H1 (cell line): ENCODE measurements at regions of chr4 and their contacts with region 1.

Region 1: GRCh38 chr4:158845311-158846041 is 76.7 kb downstream of the FNIP2 start:
- DNase-seq: peak in 1 of 2 experiments; percentile 33
- H3K4me3 ChIP-seq: peak overlapping the region in 2 of 4 experiments; percentile 14 to 34; a peak in 3 of 8 replicates
- H3K27ac ChIP-seq: peak overlapping the region; percentile 80; the same call in 1 of the 2 replicates
- H3K4me1 ChIP-seq: peaks cover 5 to 17% (median 9%) of the 10 kb centered on the region in 4 experiments
- H3K27me3 ChIP-seq: no peaks in the 10 kb centered on the region
- CTCF ChIP-seq: no peak
- EP300 ChIP-seq: no peak
- POLR2A ChIP-seq: peak in 1 of 2 experiments; percentile 41; a peak in 1 of 3 replicates
- RAD21 ChIP-seq: no peak

Region 2: DNA sequence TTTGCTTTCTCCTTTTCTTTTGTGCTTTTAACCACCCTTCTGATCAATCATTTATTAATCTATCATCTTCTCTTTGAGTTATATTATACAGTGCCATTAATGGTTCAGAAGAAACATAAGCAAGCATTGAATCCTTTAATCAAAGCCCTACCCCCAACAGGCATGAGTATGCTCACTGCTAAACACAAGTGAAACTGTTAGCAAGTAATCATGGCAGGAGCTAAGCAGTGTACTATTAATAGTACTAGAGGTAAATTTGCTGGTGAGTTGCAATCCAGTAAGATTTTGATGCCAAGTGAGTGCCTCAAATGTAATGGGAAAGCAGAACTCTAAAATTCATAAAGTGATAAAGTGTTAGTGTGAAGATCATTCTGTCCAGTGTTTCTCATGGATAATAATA is 19.4 kb before region 1 on chr4:
- CTCF ChIA-PET with region 1: interaction called, 11 read pairs
- POLR2A ChIA-PET with region 1: interaction called, 4 read pairs
- DNase-seq: no peak
- H3K4me3 ChIP-seq: no peak overlapping the region
- H3K27ac ChIP-seq: no peak overlapping the region
- H3K4me1 ChIP-seq: no peaks in the 10 kb centered on the region
- H3K27me3 ChIP-seq: no peaks in the 10 kb centered on the region
- CTCF ChIP-seq: no peak
- EP300 ChIP-seq: no peak
- POLR2A ChIP-seq: no peak
- RAD21 ChIP-seq: no peak

Region 3: DNA sequence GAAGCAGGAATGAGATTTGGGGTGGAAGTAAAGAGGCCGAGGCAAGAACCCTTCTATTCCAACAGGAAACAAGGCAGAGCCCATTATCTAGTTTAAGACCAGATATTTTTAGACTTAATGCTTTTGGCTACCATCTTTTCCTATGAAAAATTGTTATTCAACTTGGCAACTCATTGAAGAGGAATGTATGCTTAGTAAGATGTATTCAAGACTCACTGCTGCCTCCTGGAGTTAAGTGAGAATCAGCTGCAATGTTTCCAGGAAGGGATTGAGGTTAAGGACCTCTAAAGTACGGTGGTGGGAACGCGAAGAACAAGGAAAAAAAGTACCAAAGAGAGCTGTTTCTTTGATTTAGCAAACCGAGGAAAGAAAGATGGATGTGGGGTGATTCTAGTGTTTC is 346.5 kb after region 1 on chr4:
- CTCF ChIA-PET with region 1: interaction called, 12 read pairs
- POLR2A ChIA-PET with region 1: no interaction called
- DNase-seq: no peak
- H3K4me3 ChIP-seq: no peak overlapping the region
- H3K27ac ChIP-seq: no peak overlapping the region
- H3K4me1 ChIP-seq: no peaks in the 10 kb centered on the region; a peak in 1 of 7 replicates
- H3K27me3 ChIP-seq: no peaks in the 10 kb centered on the region
- CTCF ChIP-seq: peak in 2 of 3 experiments; percentile 61 to 71; a peak in 3 of 4 replicates
- EP300 ChIP-seq: no peak
- POLR2A ChIP-seq: no peak
- RAD21 ChIP-seq: peak; percentile 53 to 63; a peak in 3 of 4 replicates